Activated T-helper 1 cell treated with anti-CD3 and anti-CD28 coated beads, Interleukin-12 subunit alpha, Interleukin-12 subunit beta, Interleukin-2, Interleukin-4 antibody, amounts not matched to agents 30 ng/mL and 10 ng/mL and 1 ng/mL, durations not matched to agents 14 hours and 24 hours and 36 hours (primary cell): ENCODE measurements at regions of chr12 and their contacts with region 1.

Region 1: GRCh38 chr12:15532364-15532977 is 210.2 kb downstream of the PTPRO start:
- DNase-seq: peak; percentile 50
- H3K4me3 Mint-ChIP-seq: no peak overlapping the region
- H3K27ac Mint-ChIP-seq: no peak overlapping the region
- H3K4me1 Mint-ChIP-seq: peaks cover 14% of the 10 kb centered on the region
- H3K27me3 Mint-ChIP-seq: peaks cover 10% of the 10 kb centered on the region

Region 2: GRCh38 chr12:15546102-15546701 is 13.7 kb after region 1 on chr12:
- intact Hi-C with region 1: loop called (anchors 1 kb)
- DNase-seq: no peak
- H3K4me3 Mint-ChIP-seq: peak overlapping the region; percentile 39
- H3K27ac Mint-ChIP-seq: peak overlapping the region; percentile 80
- H3K4me1 Mint-ChIP-seq: peaks cover 44% of the 10 kb centered on the region
- H3K27me3 Mint-ChIP-seq: no peaks in the 10 kb centered on the region

Region 3: GRCh38 chr12:15563663-15564062 is 31.2 kb after region 1 on chr12:
- intact Hi-C with region 1: loop called (anchors 1 kb)
- DNase-seq: peak; percentile 20
- H3K4me3 Mint-ChIP-seq: peak overlapping the region; percentile 87
- H3K27ac Mint-ChIP-seq: peak overlapping the region; percentile 89
- H3K4me1 Mint-ChIP-seq: peaks cover 77% of the 10 kb centered on the region
- H3K27me3 Mint-ChIP-seq: peaks cover 2% of the 10 kb centered on the region

Region 4: DNA sequence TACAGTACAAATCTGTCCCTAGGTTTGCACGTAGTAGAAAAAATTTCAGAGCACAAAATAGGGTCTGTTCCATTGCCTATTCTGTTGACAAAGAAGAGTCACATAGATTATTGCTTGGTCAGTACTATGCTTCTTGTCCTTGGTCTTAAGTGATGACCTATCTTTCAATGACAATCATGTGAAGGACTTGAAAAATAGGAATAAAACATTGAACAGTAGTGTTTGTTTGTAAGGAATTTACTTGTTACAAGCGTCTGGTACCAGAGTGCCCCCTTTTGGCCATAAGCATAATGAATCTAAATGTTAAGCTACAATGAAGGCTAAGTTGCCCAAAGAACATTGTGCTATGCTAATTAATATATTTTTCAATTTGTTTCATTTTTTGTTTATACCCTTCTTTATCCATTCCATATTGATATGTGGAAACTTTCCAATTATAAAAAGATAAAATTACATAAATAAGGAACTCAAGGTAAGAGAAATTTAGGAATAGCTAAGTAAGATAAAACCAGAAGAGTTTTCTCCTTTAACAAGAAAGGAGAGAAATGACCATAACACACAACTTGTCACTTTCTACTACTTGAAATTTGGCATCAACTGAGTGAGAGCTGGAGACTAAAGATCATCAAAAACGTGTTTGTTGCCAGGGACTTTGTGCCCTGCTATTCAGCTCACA is 52.0 kb after region 1 on chr12:
- intact Hi-C with region 1: loop called (anchors 1 kb)
- DNase-seq: no peak
- H3K4me3 Mint-ChIP-seq: no peak overlapping the region
- H3K27ac Mint-ChIP-seq: no peak overlapping the region
- H3K4me1 Mint-ChIP-seq: peaks cover 13% of the 10 kb centered on the region
- H3K27me3 Mint-ChIP-seq: no peaks in the 10 kb centered on the region

Region 5: DNA sequence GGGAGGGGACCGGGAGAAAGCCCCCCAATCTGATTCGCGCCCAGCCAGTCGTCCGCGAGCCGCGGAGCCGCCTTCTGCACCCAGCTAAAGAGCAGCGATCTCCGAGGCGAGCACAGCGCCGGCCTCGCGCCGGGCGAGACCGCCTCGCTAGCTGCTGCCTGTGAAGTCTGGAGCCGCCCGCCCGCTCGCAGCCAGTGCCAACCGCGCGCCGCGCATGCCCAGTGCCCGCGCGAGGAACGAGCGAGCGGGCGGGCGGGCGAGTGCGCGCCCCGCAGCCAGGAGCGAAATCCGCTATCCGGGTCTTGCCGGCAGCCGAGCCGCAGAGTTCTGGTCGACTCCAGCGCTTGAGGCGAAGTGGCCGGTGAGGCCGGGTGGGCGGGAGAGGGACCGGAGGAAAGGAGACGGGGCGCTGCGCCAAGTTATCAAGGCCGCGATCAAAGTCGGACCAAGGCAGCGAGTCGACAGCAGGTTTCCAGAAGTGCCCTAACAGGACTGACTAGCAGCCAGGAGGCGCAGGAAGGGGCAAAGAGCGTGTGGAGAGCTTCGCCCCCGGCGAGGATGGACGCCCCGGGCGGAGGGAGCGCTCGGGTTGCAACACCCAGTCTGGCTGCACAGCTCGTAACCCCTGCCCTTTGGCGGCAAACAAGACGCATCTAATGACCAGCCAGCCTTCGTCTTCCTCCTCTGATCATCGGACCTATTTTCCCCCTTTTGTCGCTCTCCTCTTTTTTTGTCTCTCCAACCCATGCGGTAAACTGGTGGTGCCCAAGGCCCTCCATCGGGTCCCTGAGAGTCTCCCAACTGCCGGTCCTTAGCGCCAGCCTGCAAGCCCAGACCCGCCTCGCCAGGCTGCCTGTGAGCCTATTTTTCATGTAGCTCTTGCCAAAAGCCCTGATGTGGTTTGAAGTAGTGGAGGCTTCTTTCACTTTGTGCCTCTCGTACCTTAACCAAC is 257.0 kb after region 1 on chr12 and contains the start of gene EPS8:
- intact Hi-C with region 1: loop called (anchors 2 kb)
- DNase-seq: peak; percentile 83
- H3K4me3 Mint-ChIP-seq: peak within 1 kb of the TSS; percentile 91
- H3K27ac Mint-ChIP-seq: peak within 1 kb of the TSS; percentile 81
- H3K4me1 Mint-ChIP-seq: peaks cover 19% of the 10 kb centered on the region
- H3K27me3 Mint-ChIP-seq: peaks cover 73% of the 10 kb centered on the region
- total RNA-seq, gene EPS8: 1.9 and 3.1 TPM in 2 replicates

Region 6: DNA sequence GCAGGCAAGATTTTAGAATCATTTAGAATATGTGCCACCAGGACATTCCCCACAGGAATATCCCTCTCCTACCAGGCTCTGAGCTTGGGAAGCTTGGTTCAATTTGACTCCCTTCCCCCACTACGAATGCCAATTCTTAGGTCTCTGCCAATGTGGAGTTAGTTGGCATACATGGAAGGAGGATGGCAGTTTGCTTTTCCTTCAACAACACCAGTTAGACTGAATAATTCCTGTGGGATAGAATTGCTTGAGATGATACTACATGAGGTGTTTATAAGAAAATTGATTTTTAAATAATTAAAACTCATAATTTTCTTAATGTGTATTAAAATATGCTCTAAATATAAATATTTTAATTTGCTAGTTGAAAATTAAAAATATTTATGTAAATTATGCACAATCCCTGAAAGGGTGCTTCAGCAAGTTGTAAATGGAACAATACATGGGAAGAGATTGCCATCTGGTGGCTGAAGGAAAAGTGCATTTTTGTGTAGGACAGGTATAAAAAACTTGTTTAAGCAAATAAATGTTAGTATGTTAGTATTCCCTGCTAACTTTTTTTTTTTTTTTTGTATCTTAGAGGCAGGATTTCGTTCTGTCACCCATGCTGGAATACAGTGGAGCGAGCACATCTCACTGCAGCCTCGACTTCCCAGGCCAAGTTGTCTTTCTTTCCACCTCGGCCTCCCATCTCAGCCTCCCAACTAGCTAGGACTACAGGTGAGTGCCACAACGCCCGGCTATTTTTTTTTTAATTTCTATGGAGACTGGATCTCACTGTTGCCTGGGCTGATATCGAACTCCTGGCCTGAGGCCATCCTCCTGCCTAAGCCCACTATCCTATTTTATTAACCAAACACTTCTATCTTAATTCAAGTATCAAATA is 323.9 kb after region 1 on chr12:
- intact Hi-C with region 1: loop called (anchors 1 kb)
- DNase-seq: peak; percentile 17
- H3K4me3 Mint-ChIP-seq: no peak overlapping the region
- H3K27ac Mint-ChIP-seq: no peak overlapping the region
- H3K4me1 Mint-ChIP-seq: no peaks in the 10 kb centered on the region
- H3K27me3 Mint-ChIP-seq: peaks cover 16% of the 10 kb centered on the region

Region 7: DNA sequence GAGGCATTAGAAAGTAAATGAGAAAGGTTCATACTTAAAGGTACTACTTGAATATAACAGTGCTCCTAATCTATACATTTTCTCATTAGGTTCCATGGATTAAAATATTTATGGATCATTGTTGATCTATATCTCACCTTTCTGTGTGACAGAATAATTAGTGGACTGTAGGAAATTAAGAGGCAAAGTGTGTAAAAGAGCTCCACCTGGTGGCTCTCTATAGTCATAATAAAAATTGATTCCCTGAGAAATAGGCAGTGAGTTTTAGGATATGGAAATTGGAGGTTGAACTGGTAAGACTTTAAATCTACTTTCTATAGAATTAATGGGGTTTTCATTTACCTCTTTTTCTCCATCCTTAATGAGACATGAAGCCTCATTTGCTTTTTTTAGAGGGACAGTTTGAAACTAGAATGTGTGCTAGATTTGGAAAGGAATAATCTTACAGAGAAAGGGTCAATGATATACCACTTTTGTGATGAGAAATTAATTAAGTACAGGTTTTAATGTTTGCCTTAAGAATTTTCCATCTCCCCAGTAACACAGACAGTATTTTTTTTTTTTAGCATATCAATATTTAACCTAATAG is 366.9 kb after region 1 on chr12:
- intact Hi-C with region 1: loop called (anchors 5 kb)
- DNase-seq: no peak
- H3K4me3 Mint-ChIP-seq: no peak overlapping the region
- H3K27ac Mint-ChIP-seq: no peak overlapping the region
- H3K4me1 Mint-ChIP-seq: peaks cover 12% of the 10 kb centered on the region
- H3K27me3 Mint-ChIP-seq: no peaks in the 10 kb centered on the region